Activated B cell treated with CpG ODN at 0.5 μM for 24 hours (primary cell): ENCODE measurements at regions of chr2 and their contacts with region 1.

Region 1: GRCh38 chr2:218292048-218293014 is at the start of gene TMBIM1:
- DNase-seq: peak; percentile 89
- ATAC-seq: peak; percentile 80
- H3K4me3 Mint-ChIP-seq: peak within 1 kb of the TSS; percentile 83
- H3K27ac Mint-ChIP-seq: peak within 1 kb of the TSS; percentile 92
- H3K4me1 Mint-ChIP-seq: peaks cover 73% of the 10 kb centered on the region
- H3K27me3 Mint-ChIP-seq: no peaks in the 10 kb centered on the region
- CTCF ChIP-seq: peak; percentile 40
- total RNA-seq, gene TMBIM1: 40.7 and 45.0 TPM in 2 replicates

Region 2: GRCh38 chr2:218186355-218186766 is 106.0 kb before region 1 on chr2:
- CTCF ChIA-PET with region 1: no interaction called
- POLR2A ChIA-PET with region 1: no interaction called
- intact Hi-C with region 1: loop called (anchors 2 kb)
- DNase-seq: peak; percentile 43
- ATAC-seq: peak; percentile 99
- H3K4me3 Mint-ChIP-seq: no peak overlapping the region
- H3K27ac Mint-ChIP-seq: no peak overlapping the region
- H3K4me1 Mint-ChIP-seq: peaks cover 7% of the 10 kb centered on the region
- H3K27me3 Mint-ChIP-seq: peaks cover 1% of the 10 kb centered on the region
- CTCF ChIP-seq: peak; percentile 3

Region 3: GRCh38 chr2:218322895-218323808 is 30.8 kb after region 1 on chr2:
- CTCF ChIA-PET with region 1: no interaction called
- POLR2A ChIA-PET with region 1: interaction called, 6 read pairs
- intact Hi-C with region 1: loop called (anchors 1 kb)
- DNase-seq: peak; percentile 65
- ATAC-seq: peak; percentile 74
- H3K4me3 Mint-ChIP-seq: peak overlapping the region; percentile 81
- H3K27ac Mint-ChIP-seq: peak overlapping the region; percentile 61
- H3K4me1 Mint-ChIP-seq: peaks cover 42% of the 10 kb centered on the region
- H3K27me3 Mint-ChIP-seq: peaks cover 7% of the 10 kb centered on the region
- CTCF ChIP-seq: no peak

Region 4: DNA sequence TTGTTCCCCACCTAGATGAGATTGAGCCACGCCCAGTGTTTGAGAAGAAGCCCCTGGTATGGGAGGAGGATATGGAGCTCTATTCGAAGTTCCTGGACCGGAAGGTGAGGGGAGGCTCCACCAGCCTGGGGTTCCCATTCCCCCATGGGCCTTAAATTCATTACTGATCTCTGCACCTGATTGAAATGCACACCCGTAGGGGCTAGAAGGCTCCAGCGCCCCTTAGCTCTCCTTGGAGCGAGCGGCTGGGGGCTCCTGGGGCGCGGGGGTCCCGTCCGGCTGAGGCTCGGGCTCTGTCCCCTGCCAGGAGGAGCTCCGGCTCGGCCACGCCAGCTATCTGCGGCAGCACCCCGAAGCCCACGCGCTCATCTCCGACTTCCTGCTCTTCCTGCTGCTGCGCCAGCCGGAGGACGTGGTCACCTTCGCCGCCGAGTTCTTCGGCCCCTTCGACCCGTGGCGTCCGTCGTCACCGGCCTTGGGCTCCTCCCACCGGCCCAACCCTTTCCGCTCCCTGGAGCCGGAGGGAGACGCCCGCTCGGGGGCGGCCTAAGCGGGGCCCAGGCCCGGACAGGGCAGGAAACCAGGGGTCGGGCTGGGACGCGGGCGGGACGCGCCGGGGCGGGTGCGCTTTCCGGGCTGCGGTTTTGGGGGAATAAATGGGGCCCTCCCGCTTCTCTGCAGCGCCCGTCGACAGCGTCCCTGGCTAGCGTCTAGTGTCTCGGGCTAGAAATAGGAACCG is 75.3 kb after region 1 on chr2:
- CTCF ChIA-PET with region 1: no interaction called
- POLR2A ChIA-PET with region 1: interaction called, 4 read pairs
- intact Hi-C with region 1: loop called (anchors 2 kb)
- DNase-seq: peak; percentile 74
- ATAC-seq: peak; percentile 86
- H3K4me3 Mint-ChIP-seq: peak overlapping the region; percentile 85
- H3K27ac Mint-ChIP-seq: peak overlapping the region; percentile 84
- H3K4me1 Mint-ChIP-seq: peaks cover 36% of the 10 kb centered on the region
- H3K27me3 Mint-ChIP-seq: no peaks in the 10 kb centered on the region
- CTCF ChIP-seq: no peak

Region 5: DNA sequence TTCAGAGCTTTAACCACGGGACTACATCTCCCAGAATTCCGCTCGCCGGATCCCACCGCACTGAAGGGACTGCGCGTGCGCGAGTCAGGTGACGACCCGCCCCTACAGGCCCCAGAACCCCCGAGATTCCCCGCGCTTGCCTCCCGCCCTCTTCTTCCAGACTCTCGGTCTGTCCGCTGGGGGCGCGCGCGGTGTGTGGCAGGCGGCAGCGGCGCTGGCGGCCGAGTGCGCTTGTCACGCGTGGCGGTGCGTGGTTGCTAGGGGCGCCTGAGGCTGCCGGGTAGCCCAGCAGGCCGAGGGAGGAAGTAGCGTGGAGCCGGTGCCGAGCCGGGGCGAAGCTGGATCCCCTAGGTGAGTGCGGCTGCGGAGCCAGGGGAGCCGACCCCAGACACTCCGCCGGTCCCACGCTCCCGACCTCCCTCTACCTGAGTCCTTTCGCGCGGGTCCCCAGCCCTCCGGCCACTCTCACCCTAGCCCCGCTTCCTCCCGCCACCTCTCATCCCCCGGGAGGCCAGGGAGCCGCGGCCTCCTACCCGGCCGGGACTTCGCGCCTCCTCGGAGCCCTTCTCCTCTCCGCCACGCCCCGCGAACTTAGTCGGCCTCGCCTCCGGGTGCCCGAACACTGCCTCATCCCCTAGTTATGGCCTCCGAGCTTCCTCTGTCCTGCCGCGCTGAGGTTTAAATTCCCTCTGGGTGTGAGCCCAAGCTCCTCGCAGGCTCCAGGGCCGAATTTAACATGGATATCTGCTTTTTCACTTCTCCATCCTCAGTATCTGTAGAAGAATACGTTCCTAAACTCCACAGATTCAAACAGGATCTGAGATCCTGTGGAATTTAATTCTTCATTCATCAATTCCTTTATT is 418.6 kb after region 1 on chr2 and contains the start of gene TTLL4:
- CTCF ChIA-PET with region 1: no interaction called
- POLR2A ChIA-PET with region 1: no interaction called
- intact Hi-C with region 1: loop called (anchors 5 kb)
- DNase-seq: peak; percentile 98
- ATAC-seq: peak; percentile 97
- H3K4me3 Mint-ChIP-seq: peak within 1 kb of the TSS; percentile 91
- H3K27ac Mint-ChIP-seq: peak within 1 kb of the TSS; percentile 86
- H3K4me1 Mint-ChIP-seq: peaks cover 26% of the 10 kb centered on the region
- H3K27me3 Mint-ChIP-seq: no peaks in the 10 kb centered on the region
- CTCF ChIP-seq: no peak
- total RNA-seq, gene TTLL4: 36.0 and 37.2 TPM in 2 replicates